ENCODE measurements at regions of chr2 and their contacts with region 1.

Region 1: DNA sequence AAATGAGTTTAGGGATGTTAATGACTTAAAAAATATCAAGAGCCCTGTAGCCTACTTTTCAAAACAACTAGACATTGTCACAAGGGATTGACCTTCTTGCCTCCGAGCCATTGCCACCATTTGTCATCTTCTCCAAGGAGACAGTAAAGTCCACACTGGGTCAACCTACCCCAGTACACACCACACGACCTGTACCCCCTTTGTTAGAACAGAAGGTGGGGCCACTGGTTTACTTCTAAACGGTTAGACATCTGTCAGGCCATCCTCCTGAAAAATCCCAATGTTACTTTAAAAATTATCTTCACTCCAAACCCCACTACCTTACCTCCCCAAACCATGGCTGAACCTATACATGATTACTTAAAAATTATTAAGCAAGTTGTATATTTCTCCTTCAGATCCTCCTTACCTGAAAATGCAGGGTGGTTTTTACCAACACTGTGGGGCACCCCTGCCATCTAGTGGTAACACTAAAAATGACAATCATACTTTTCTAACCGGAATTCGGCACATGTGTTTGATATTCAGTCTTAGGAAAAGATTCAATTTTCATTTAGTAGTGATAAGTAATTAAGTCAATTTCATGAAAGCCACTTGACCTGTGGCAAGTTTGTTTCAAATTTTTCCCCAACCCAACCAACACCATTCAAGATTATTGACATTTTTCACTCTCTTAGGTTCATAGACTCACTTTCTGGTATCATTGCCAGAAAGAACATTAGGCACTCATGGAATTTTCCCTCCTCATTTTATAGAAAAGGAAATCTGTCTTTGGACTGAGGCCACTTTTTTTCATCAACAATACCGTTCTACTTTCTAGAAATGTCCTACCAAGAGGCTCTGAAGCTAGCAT is 265.3 kb upstream of the PKDCC start:
- DNase-seq: peak; percentile 1 to 25 (median 18)
- H3K4me3 ChIP-seq: no peak overlapping the region
- H3K4me3 Mint-ChIP-seq: no peak overlapping the region
- H3K27ac ChIP-seq: no peak overlapping the region
- H3K27ac Mint-ChIP-seq: peak overlapping the region in 1 of 7 donors; percentile 46
- H3K4me1 ChIP-seq: no peaks in the 10 kb centered on the region
- H3K4me1 Mint-ChIP-seq: no peaks in the 10 kb centered on the region
- H3K27me3 ChIP-seq: peaks cover 0 to 2% of the 10 kb centered on the region in 2 donors
- H3K27me3 Mint-ChIP-seq: peaks cover 0 to 7% (median 5%) of the 10 kb centered on the region in 3 donors
- CTCF ChIP-seq: peak; percentile 88

Region 2: GRCh38 chr2:39919511-39920306 is 1862.8 kb before region 1 on chr2:
- intact Hi-C with region 1: loop called (anchors 5 kb)
- DNase-seq: no peak
- H3K4me3 ChIP-seq: no peak overlapping the region
- H3K4me3 Mint-ChIP-seq: no peak overlapping the region
- H3K27ac ChIP-seq: no peak overlapping the region
- H3K27ac Mint-ChIP-seq: no peak overlapping the region
- H3K4me1 ChIP-seq: peaks cover 0 to 4% of the 10 kb centered on the region in 2 donors
- H3K4me1 Mint-ChIP-seq: peaks cover 12% of the 10 kb centered on the region
- H3K27me3 ChIP-seq: no peaks in the 10 kb centered on the region
- H3K27me3 Mint-ChIP-seq: peaks cover 0 to 1% (median 1%) of the 10 kb centered on the region in 3 donors
- CTCF ChIP-seq: no peak

Region 3: DNA sequence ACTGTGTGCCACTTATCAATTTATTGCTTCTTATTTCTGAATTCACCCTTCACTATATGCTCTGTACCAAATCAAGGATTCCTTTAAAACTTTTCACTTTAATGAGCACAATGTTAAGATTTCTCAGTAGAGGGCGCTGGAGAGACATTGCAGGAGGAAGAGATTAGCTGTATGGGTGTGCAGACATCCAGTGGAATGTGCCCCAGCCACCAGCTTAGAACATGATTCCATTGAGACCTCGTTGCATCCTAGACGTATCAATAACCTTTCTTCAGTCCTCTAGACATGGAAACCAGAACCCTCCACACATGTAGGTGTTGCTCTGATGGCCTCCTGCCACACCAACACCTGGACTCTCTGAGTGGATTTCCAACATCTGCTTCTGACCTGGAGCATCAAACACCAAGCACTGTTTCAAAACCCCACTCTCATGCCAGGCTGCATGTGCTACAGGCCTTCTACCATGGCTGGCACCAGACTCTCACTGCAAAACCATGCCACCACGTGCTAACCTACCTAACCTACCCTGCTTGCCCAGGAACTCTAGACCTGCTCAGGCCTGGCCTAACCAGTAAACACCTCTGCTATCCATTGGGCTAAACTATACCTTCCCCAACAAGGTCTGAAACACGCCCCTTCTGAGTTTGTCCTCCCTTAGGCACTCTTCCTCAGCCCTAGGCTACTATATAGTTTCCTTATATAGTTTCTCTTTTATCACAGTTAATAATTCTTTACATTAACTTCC is 367.9 kb before region 1 on chr2:
- intact Hi-C with region 1: loop called (anchors 5 to 10 kb)
- DNase-seq: peak; percentile 0 to 10 (median 2)
- H3K4me3 ChIP-seq: no peak overlapping the region
- H3K4me3 Mint-ChIP-seq: no peak overlapping the region
- H3K27ac ChIP-seq: no peak overlapping the region
- H3K27ac Mint-ChIP-seq: peak overlapping the region in 1 of 7 donors; percentile 46
- H3K4me1 ChIP-seq: no peaks in the 10 kb centered on the region
- H3K4me1 Mint-ChIP-seq: no peaks in the 10 kb centered on the region
- H3K27me3 ChIP-seq: no peaks in the 10 kb centered on the region
- H3K27me3 Mint-ChIP-seq: peaks cover 0 to 1% (median 0%) of the 10 kb centered on the region in 3 donors
- CTCF ChIP-seq: peak; percentile 55